Natural killer cell (primary cell): ENCODE measurements at regions of chr5 and their contacts with region 1.

Region 1: DNA sequence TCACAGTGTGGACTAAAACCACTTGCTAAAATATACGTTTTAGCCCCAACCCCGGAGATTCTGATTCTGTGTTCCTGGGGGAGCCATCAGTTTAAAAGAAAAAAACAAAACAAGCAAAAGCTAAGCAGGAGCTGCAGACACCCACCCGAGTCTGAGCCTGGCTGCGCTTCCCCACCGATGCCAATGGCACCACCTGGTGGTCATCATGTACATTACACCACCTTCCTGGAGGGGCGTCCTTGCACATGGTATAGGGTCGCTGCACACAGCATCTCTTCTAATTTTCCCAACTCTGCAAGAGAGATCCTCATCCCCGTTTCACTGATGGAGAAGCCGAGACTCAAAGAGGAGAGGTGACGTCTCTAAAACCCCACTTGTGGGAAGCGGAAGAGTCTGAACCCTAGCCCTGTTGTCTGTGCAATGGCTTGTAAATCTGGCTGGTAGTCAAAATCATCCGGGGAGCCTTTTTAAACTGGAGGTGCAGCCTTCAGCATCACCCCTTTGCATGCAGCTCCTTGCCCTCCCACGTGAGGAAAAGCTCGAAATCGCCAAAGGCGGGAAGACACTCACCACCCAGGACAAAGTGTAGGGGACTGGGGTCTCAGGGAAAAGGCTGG is 23.1 kb upstream of the CNOT6 start:
- DNase-seq: peak; percentile 47 to 84
- ATAC-seq: peak; percentile 82 to 96 (median 95)
- H3K4me3 ChIP-seq: no peak overlapping the region
- H3K4me3 Mint-ChIP-seq: no peak overlapping the region
- H3K27ac ChIP-seq: no peak overlapping the region
- H3K27ac Mint-ChIP-seq: no peak overlapping the region
- H3K4me1 ChIP-seq: peaks cover 5% of the 10 kb centered on the region
- H3K4me1 Mint-ChIP-seq: no peaks in the 10 kb centered on the region
- H3K27me3 ChIP-seq: no peaks in the 10 kb centered on the region
- H3K27me3 Mint-ChIP-seq: peaks cover 7 to 10% of the 10 kb centered on the region in 2 donors
- CTCF ChIP-seq: peak; percentile 97

Region 2: GRCh38 chr5:180201051-180201987 is 269.8 kb before region 1 on chr5:
- intact Hi-C with region 1: loop called (anchors 5 kb)
- DNase-seq: peak in 1 of 2 donors; percentile 41
- ATAC-seq: no peak
- H3K4me3 ChIP-seq: no peak overlapping the region
- H3K4me3 Mint-ChIP-seq: no peak overlapping the region
- H3K27ac ChIP-seq: no peak overlapping the region
- H3K27ac Mint-ChIP-seq: no peak overlapping the region
- H3K4me1 ChIP-seq: no peaks in the 10 kb centered on the region
- H3K4me1 Mint-ChIP-seq: no peaks in the 10 kb centered on the region
- H3K27me3 ChIP-seq: no peaks in the 10 kb centered on the region
- H3K27me3 Mint-ChIP-seq: peaks cover 6 to 8% of the 10 kb centered on the region in 2 donors
- CTCF ChIP-seq: no peak